WTC11 (cell line): ENCODE measurements at regions of chr4 and their contacts with region 1.

Region 1: DNA sequence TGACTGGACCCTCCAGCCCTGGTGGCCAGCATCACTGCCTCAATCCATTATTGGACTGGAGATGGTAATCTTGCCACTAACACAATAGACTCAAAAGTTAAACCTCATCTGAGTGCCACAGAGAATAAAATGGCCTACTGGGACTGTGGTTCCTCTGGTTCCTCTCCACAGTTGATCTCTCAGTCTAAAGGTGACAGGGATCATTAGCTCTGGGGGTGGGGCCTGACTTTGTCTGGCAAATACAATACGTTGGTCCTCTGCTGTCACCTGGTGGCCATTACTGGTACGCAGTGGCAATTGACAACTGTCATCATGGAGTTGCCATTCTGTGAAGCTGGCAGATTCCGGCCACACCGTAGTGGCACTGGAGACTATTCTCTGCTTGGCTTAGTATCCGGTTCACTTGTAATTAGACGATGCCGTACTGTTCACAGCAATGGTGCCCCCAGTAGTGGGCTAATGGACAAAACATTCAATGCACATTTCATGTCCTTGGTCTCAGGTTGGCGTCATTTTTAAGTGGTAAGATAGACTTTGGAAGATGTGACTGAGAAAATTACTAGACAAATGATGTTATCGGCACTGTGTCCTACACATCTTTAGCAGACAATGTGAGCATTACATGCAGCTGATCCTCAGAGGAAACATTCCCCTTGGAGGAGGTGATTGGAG is 6.7 kb downstream of the FGFBP2 start:
- DNase-seq: peak; percentile 92
- ATAC-seq: peak; percentile 95
- H3K4me3 Mint-ChIP-seq: no peak overlapping the region
- H3K27ac Mint-ChIP-seq: no peak overlapping the region
- H3K4me1 Mint-ChIP-seq: peaks cover 12% of the 10 kb centered on the region
- H3K27me3 Mint-ChIP-seq: 0 out of 2 replicates have a peak, but pooled peaks cover 4% of the 10 kb centered on the region
- CTCF ChIP-seq: peak; percentile 84

Region 2: DNA sequence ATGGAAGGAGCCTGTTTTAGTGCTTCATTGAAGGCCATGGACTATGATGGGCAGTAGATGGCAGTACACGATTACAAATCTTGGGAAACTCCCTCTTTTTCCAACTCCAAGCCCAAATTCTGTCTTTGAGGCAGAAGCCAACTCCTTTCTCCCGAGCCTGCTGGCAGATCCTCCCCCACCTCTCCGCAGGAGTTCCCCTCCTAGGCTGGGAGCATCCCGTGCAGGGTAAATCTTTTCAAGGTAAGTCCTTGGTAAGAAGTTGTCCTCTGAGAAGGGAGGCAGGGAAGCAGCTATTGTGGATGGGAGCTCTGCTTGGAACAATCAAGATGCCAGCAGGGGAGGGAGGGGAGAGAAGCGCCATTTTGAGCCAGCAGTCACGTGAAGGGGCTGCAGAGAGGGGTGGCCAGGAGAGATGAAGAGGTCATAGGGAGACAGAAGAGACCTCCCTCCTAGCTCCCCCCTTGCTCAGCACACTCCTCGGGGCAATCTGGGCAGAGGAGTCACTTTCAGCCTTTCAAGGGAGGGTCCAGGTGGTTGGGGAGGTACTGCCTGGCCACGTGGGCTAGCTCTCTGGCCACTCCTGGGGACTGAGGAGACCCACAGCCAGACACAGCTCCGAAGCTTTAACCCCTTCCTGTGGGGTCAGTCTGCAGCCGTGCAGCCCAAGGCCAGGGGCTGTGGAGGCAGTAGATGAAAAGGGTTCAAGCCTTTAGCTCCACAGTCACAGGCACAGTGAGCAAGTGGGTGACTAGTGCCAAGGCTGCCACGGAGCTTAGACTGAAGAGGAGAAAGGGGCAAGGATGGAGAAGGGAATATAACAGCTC is 477.0 kb before region 1 on chr4:
- CTCF ChIA-PET with region 1: interaction called, 24 read pairs
- POLR2A ChIA-PET with region 1: no interaction called
- DNase-seq: peak; percentile 58
- ATAC-seq: peak; percentile 90
- H3K4me3 Mint-ChIP-seq: peak overlapping the region; percentile 82
- H3K27ac Mint-ChIP-seq: peak overlapping the region; percentile 95
- H3K4me1 Mint-ChIP-seq: peaks cover 13% of the 10 kb centered on the region
- H3K27me3 Mint-ChIP-seq: no peaks in the 10 kb centered on the region
- CTCF ChIP-seq: no peak; the same call in 1 of the 2 replicates

Region 3: GRCh38 chr4:15848191-15848842 is 108.0 kb before region 1 on chr4:
- CTCF ChIA-PET with region 1: interaction called, 10 read pairs
- POLR2A ChIA-PET with region 1: no interaction called
- DNase-seq: no peak
- ATAC-seq: no peak
- H3K4me3 Mint-ChIP-seq: no peak overlapping the region
- H3K27ac Mint-ChIP-seq: no peak overlapping the region
- H3K4me1 Mint-ChIP-seq: peaks cover 4% of the 10 kb centered on the region
- H3K27me3 Mint-ChIP-seq: no peaks in the 10 kb centered on the region; the same call in 1 of the 2 replicates
- CTCF ChIP-seq: no peak

Region 4: DNA sequence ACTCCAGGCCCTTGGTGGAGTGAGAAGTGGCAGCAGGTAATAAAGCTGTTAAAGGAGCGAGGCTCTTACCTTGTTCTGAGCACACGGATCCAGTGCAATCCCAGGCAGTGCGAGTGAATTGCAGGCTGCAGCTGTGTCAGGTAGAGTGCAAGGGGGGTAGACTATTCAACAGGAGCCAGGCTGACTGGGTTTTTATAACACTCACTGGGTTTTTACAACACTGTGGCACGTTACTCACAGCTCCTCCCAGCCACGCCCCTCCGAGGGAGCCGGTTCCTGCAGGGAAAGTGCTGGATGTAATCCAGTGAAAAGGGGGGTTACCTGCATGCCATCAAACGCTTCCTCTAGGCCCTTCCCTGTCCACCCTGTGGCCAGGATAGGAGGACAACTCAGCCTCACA is 18.1 kb before region 1 on chr4:
- CTCF ChIA-PET with region 1: interaction called, 13 read pairs
- POLR2A ChIA-PET with region 1: no interaction called
- DNase-seq: peak; percentile 25
- ATAC-seq: peak; percentile 81
- H3K4me3 Mint-ChIP-seq: no peak overlapping the region
- H3K27ac Mint-ChIP-seq: no peak overlapping the region
- H3K4me1 Mint-ChIP-seq: peaks cover 11% of the 10 kb centered on the region
- H3K27me3 Mint-ChIP-seq: no peaks in the 10 kb centered on the region
- CTCF ChIP-seq: no peak